Activated CD4-positive, alpha-beta memory T cell treated with anti-CD3 and anti-CD28 coated beads for 36 hours (primary cell): ENCODE measurements at regions of chr5 and their contacts with region 1.

Region 1: GRCh38 chr5:167723254-167723871 is 568.1 kb upstream of the WWC1 start:
- DNase-seq: peak; percentile 74
- H3K4me3 Mint-ChIP-seq: no peak overlapping the region
- H3K27ac Mint-ChIP-seq: no peak overlapping the region
- H3K4me1 Mint-ChIP-seq: no peaks in the 10 kb centered on the region
- H3K27me3 Mint-ChIP-seq: peaks cover 4% of the 10 kb centered on the region

Region 2: GRCh38 chr5:167678481-167678880 is 44.9 kb before region 1 on chr5:
- CTCF ChIA-PET with region 1: no interaction called
- POLR2A ChIA-PET with region 1: no interaction called
- intact Hi-C with region 1: no loop called
- DNase-seq: no peak
- H3K4me3 Mint-ChIP-seq: no peak overlapping the region
- H3K27ac Mint-ChIP-seq: no peak overlapping the region
- H3K4me1 Mint-ChIP-seq: no peaks in the 10 kb centered on the region
- H3K27me3 Mint-ChIP-seq: no peaks in the 10 kb centered on the region

Region 3: GRCh38 chr5:168047043-168047668 is 323.8 kb after region 1 on chr5:
- CTCF ChIA-PET with region 1: interaction called, 3 read pairs
- POLR2A ChIA-PET with region 1: no interaction called
- intact Hi-C with region 1: loop called (anchors 1 kb)
- DNase-seq: peak; percentile 25
- H3K4me3 Mint-ChIP-seq: no peak overlapping the region
- H3K27ac Mint-ChIP-seq: no peak overlapping the region
- H3K4me1 Mint-ChIP-seq: no peaks in the 10 kb centered on the region
- H3K27me3 Mint-ChIP-seq: no peaks in the 10 kb centered on the region

Region 4: GRCh38 chr5:168219515-168220410 is 496.4 kb after region 1 on chr5:
- CTCF ChIA-PET with region 1: interaction called, 39 read pairs
- POLR2A ChIA-PET with region 1: no interaction called
- intact Hi-C with region 1: loop called (anchors 1 kb)
- DNase-seq: peak; percentile 33
- H3K4me3 Mint-ChIP-seq: no peak overlapping the region
- H3K27ac Mint-ChIP-seq: no peak overlapping the region
- H3K4me1 Mint-ChIP-seq: peaks cover 2% of the 10 kb centered on the region
- H3K27me3 Mint-ChIP-seq: peaks cover 6% of the 10 kb centered on the region